Activated CD8-positive, alpha-beta T cell treated with anti-CD3 and anti-CD28 coated beads for 36 hours (primary cell): ENCODE measurements at regions of chr11 and their contacts with region 1.

Region 1: DNA sequence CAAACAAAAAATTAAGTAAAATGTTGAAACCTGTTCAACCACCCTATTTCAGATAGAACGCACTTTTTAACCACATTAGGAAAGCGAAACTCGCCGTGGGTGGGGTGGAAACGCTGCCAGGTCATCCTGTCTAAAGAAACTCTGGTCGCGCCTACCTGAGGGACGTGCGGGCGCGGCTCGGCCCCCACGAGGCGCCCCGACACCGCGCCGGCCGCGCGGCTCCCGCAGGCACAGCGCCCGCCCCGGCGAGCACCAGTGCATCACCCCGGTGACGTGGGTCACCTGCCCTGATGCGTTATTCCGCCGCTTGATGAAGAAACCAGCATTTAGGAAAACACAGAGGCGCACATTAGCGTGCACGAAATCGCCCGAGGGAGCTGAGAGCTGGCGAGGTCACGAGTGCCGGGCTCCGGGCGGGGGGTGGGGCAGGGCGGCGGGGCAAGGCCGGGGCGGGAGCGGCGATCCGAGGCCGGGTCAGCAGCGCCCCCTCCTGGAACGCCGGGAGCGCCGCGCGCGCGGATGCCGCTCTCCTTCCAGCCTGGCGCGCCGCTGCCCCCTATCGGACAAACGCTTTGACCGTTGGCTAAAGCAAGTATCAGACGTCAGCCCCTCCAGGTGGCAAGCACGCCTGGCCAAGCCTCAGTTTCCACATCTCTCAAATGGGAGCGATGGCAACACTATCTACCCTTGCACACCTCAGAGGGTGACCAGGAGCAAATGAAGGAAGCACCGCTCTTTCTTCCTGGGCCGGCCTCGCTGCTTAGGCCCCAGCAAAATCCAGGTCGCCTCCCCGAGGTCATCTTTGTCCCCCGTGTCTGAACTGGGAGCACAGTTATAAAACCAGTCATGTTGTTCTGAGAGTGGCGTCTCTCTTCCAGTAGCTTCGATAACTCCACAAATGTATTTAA is 15.7 kb upstream of the SNX32 start:
- DNase-seq: peak; percentile 97
- ATAC-seq: peak; percentile 94
- H3K4me3 Mint-ChIP-seq: peak overlapping the region; percentile 72
- H3K27ac Mint-ChIP-seq: peak overlapping the region; percentile 82
- H3K4me1 Mint-ChIP-seq: peaks cover 17% of the 10 kb centered on the region
- H3K27me3 Mint-ChIP-seq: no peaks in the 10 kb centered on the region
- CTCF ChIP-seq: peak; percentile 100

Region 2: GRCh38 chr11:65703846-65704245 is 114.2 kb before region 1 on chr11:
- CTCF ChIA-PET with region 1: interaction called, 14 read pairs
- POLR2A ChIA-PET with region 1: interaction called, 3 read pairs
- intact Hi-C with region 1: no loop called
- DNase-seq: no peak
- ATAC-seq: no peak
- H3K4me3 Mint-ChIP-seq: no peak overlapping the region
- H3K27ac Mint-ChIP-seq: no peak overlapping the region
- H3K4me1 Mint-ChIP-seq: peaks cover 7% of the 10 kb centered on the region
- H3K27me3 Mint-ChIP-seq: peaks cover 1% of the 10 kb centered on the region
- CTCF ChIP-seq: no peak

Region 3: GRCh38 chr11:65720237-65720934 is 97.7 kb before region 1 on chr11 and contains the start of gene RNASEH2C:
- CTCF ChIA-PET with region 1: interaction called, 36 read pairs
- POLR2A ChIA-PET with region 1: interaction called, 5 read pairs
- intact Hi-C with region 1: no loop called
- DNase-seq: peak; percentile 91
- ATAC-seq: peak; percentile 94
- H3K4me3 Mint-ChIP-seq: peak within 1 kb of the TSS; percentile 88
- H3K27ac Mint-ChIP-seq: peak within 1 kb of the TSS; percentile 96
- H3K4me1 Mint-ChIP-seq: peaks cover 22% of the 10 kb centered on the region
- H3K27me3 Mint-ChIP-seq: no peaks in the 10 kb centered on the region
- CTCF ChIP-seq: no peak
- total RNA-seq, gene RNASEH2C: 101 to 109 TPM

Region 4: GRCh38 chr11:65791691-65792213 is 26.3 kb before region 1 on chr11:
- CTCF ChIA-PET with region 1: interaction called, 20 read pairs
- POLR2A ChIA-PET with region 1: interaction called, 6 read pairs
- intact Hi-C with region 1: no loop called
- DNase-seq: peak; percentile 89
- ATAC-seq: peak; percentile 96
- H3K4me3 Mint-ChIP-seq: no peak overlapping the region
- H3K27ac Mint-ChIP-seq: peak overlapping the region; percentile 73
- H3K4me1 Mint-ChIP-seq: peaks cover 15% of the 10 kb centered on the region
- H3K27me3 Mint-ChIP-seq: peaks cover 27% of the 10 kb centered on the region
- CTCF ChIP-seq: no peak

Region 5: GRCh38 chr11:65833297-65834030 is 15.4 kb after region 1 on chr11 and contains the start of gene SNX32:
- CTCF ChIA-PET with region 1: interaction called, 24 read pairs
- POLR2A ChIA-PET with region 1: interaction called, 5 read pairs
- intact Hi-C with region 1: no loop called
- DNase-seq: peak; percentile 98
- ATAC-seq: peak; percentile 100
- H3K4me3 Mint-ChIP-seq: no peak within 1 kb of the TSS
- H3K27ac Mint-ChIP-seq: no peak within 1 kb of the TSS
- H3K4me1 Mint-ChIP-seq: peaks cover 28% of the 10 kb centered on the region
- H3K27me3 Mint-ChIP-seq: peaks cover 2% of the 10 kb centered on the region
- CTCF ChIP-seq: no peak
- total RNA-seq, gene SNX32: 1.6 to 2.1 TPM